ENCODE measurements at regions of chr18 and their contacts with region 1.

Region 1: GRCh38 chr18:80157708-80158343 is 48.8 kb downstream of the ADNP2 start:
- DNase-seq: peak; percentile 76
- H3K4me3 ChIP-seq: no peak overlapping the region
- H3K27ac ChIP-seq: no peak overlapping the region
- H3K4me1 ChIP-seq: peaks cover 0 to 3% of the 10 kb centered on the region in 2 experiments; a peak in 1 of 4 replicates
- H3K27me3 ChIP-seq: no peaks in the 10 kb centered on the region
- CTCF ChIP-seq: peak; percentile 97
- EP300 ChIP-seq: no peak
- RAD21 ChIP-seq: peak; percentile 94

Region 2: DNA sequence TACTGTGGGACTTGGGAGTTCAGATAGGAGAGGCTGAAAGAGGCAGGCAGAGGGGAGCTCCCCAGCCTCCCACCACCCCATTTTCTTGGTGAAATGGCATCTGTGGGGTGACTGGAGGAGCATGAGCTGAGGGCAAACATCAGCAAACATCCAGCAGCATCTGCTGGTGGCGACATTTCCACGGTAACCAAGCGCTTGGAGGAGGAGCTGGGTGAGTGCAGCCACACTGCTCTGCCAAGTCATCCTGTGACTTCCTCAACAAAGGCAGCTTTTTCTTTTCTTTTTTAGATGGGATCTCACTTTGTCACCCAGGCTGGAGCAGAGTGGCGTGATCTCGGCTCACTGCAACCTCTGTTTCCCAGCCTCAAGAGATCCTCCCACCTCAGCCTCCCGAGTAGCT is 175.1 kb before region 1 on chr18:
- CTCF ChIA-PET with region 1: no interaction called
- POLR2A ChIA-PET with region 1: no interaction called
- DNase-seq: no peak
- H3K4me3 ChIP-seq: no peak overlapping the region
- H3K27ac ChIP-seq: no peak overlapping the region
- H3K4me1 ChIP-seq: peaks cover 4 to 10% of the 10 kb centered on the region in 2 experiments; a peak in 2 of 4 replicates
- H3K27me3 ChIP-seq: no peaks in the 10 kb centered on the region
- CTCF ChIP-seq: no peak
- EP300 ChIP-seq: no peak
- RAD21 ChIP-seq: no peak

Region 3: GRCh38 chr18:80147418-80148325 is 10.2 kb before region 1 on chr18:
- CTCF ChIA-PET with region 1: interaction called, 31 read pairs
- POLR2A ChIA-PET with region 1: no interaction called
- DNase-seq: peak; percentile 79
- H3K4me3 ChIP-seq: peak overlapping the region; percentile 63 to 66
- H3K27ac ChIP-seq: peak overlapping the region in 1 of 2 experiments; percentile 53; a peak in 3 of 4 replicates
- H3K4me1 ChIP-seq: peaks cover 0 to 8% of the 10 kb centered on the region in 2 experiments; a peak in 3 of 4 replicates
- H3K27me3 ChIP-seq: no peaks in the 10 kb centered on the region
- CTCF ChIP-seq: no peak
- EP300 ChIP-seq: no peak
- RAD21 ChIP-seq: no peak

Region 4: GRCh38 chr18:80176334-80177073 is 18.7 kb after region 1 on chr18:
- CTCF ChIA-PET with region 1: interaction called, 19 read pairs
- POLR2A ChIA-PET with region 1: no interaction called
- DNase-seq: no peak
- H3K4me3 ChIP-seq: no peak overlapping the region
- H3K27ac ChIP-seq: no peak overlapping the region
- H3K4me1 ChIP-seq: no peaks in the 10 kb centered on the region; a peak in 1 of 4 replicates
- H3K27me3 ChIP-seq: no peaks in the 10 kb centered on the region
- CTCF ChIP-seq: no peak
- EP300 ChIP-seq: no peak
- RAD21 ChIP-seq: no peak

Region 5: GRCh38 chr18:80200171-80200931 is 42.5 kb after region 1 on chr18:
- CTCF ChIA-PET with region 1: interaction called, 15 read pairs
- POLR2A ChIA-PET with region 1: no interaction called
- DNase-seq: no peak
- H3K4me3 ChIP-seq: no peak overlapping the region
- H3K27ac ChIP-seq: no peak overlapping the region
- H3K4me1 ChIP-seq: peaks cover 0 to 8% of the 10 kb centered on the region in 2 experiments; a peak in 1 of 4 replicates
- H3K27me3 ChIP-seq: no peaks in the 10 kb centered on the region
- CTCF ChIP-seq: no peak
- EP300 ChIP-seq: no peak
- RAD21 ChIP-seq: no peak

Region 6: DNA sequence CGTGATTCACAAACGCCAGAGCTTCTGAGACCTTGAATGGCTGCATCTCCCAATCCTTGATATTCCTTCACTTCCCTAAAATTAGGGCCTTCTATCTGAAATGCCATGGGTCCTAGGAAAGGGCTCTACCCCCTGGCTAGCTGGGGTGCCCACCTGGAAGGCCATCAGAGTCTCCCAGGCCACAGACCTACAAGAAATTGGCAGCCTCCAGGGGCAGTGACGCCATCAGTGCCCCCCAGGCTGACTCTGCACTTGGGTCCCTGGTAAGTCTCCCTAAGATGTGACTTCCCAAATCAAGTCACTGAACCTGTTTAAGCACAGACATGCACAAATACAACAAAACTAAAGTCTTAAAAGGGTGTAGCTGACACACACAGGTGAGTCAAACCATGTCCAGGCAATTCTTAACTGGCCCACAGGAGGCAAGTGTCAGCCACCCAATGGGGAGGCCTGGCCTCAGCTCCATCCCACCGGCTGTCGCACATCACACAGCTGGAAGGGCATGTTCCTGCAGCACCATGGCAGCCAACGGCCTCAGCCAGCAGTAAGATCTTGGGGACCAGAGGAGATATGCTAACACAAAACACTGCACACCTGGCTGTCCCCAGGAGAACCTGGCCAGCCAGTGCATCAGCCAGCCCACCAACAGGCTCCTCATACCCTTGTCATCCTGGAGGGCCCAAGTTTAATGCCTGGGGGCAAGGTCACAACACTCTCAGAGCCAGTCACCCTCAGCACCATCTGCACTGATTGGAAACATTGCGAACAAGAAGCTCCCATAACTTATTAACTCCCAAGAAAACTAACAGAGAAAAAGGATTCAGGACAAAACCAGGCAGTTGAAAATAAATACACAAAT is 84.3 kb after region 1 on chr18:
- CTCF ChIA-PET with region 1: interaction called, 152 read pairs
- POLR2A ChIA-PET with region 1: no interaction called
- DNase-seq: no peak
- H3K4me3 ChIP-seq: no peak overlapping the region
- H3K27ac ChIP-seq: no peak overlapping the region
- H3K4me1 ChIP-seq: peaks cover 0 to 12% of the 10 kb centered on the region in 2 experiments; a peak in 1 of 4 replicates
- H3K27me3 ChIP-seq: no peaks in the 10 kb centered on the region
- CTCF ChIP-seq: no peak
- EP300 ChIP-seq: no peak
- RAD21 ChIP-seq: no peak

Measured in SK-N-SH (cell line).